ENCODE measurements at regions of chr4 and their contacts with region 1.

Region 1: GRCh38 chr4:26860157-26860921 is at the start of gene STIM2:
- DNase-seq: peak; percentile 97
- H3K4me3 Mint-ChIP-seq: peak within 1 kb of the TSS; percentile 94
- H3K27ac Mint-ChIP-seq: peak within 1 kb of the TSS; percentile 96
- H3K4me1 Mint-ChIP-seq: peaks cover 41% of the 10 kb centered on the region
- H3K27me3 Mint-ChIP-seq: no peaks in the 10 kb centered on the region
- total RNA-seq, gene STIM2: 40.5 to 43.1 TPM

Region 2: DNA sequence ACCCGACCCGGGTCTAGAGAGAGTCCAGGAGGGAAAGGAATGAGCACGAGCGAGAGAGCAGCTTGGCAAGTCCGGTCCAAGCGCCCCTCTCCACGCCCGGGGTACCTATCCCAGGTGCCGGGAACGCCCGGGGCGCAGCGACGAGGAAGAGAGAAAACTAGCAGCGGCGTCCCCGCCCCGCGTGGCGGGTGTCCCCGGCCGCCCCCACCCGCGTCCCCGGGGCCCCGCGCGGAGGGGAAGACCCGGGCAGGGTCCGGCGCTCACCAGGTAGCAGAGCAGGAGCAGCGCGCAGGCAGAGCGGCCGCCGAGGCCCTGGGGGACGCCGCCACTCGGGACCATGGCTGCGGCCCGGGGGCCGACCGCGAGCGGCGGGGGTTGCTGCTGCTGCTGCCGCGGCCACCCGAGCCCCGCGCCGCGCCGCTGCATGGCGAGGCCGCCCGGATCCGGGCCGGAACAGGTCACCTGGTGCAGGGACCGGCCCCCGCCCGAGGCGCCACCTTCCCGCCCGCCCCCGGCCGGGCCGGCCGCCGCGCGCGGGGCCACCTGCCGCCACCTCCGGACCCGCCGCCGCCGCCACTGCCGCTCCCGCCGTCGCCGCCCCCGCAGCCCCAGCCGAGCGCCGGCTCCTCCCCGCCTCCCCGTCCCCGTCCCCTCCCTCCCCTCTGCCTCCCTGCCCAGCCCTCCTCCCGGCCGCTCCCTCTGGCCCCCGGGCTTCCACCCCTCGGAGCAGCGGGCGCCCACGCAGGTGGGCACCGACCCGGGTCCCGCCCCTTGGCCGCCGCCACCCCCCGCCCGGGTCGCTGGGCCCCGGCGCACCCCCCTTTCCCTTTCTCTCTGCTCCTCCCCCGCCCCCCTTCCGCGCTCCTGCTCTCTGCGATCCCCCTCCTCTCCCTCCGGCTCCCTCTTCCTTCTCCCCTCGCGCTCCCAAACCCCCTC is 997.7 kb before region 1 on chr4 and contains the start of gene SEL1L3:
- CTCF ChIA-PET with region 1: no interaction called
- intact Hi-C with region 1: loop called (anchors 2 kb)
- DNase-seq: peak; percentile 53
- H3K4me3 Mint-ChIP-seq: peak within 1 kb of the TSS; percentile 93
- H3K27ac Mint-ChIP-seq: peak within 1 kb of the TSS; percentile 92
- H3K4me1 Mint-ChIP-seq: peaks cover 33% of the 10 kb centered on the region
- H3K27me3 Mint-ChIP-seq: no peaks in the 10 kb centered on the region
- total RNA-seq, gene SEL1L3: 32.3 to 38.2 TPM

Region 3: DNA sequence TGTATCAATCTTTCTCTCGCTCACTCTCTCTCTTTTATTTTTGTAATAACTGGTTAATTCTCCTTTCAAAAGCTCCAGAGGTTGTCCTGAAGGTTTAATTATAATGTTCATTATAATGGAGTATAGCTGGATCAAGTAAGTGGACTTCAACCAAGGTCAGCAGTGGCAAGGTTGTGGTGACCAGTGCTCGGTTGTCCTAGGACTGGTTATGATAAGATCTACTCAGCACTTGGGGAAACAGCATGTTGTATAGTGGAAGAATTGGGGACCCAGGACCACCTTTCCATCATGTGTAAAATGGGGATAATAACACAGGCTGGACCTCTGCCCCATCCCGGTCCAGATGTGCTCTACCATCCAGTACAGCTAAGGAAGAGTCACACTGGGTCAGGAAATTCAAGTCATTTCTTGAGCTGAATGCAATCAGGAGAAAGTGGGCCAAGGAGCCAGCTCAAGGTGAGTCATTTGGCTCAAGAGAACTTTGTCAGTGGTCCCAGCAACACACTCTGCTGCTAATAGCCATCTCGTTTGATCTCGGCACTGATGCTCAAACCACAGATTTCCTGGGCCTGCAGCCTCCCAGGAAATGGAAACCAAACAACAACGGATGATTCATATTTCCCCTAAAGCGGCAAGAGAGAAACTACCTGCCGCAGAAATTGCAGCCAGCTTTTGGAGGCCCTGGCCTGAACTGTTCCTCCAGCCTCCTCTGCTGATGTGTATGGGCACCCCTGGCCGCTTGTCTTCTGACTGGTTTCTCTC is 663.1 kb before region 1 on chr4:
- CTCF ChIA-PET with region 1: no interaction called
- intact Hi-C with region 1: loop called (anchors 5 kb)
- DNase-seq: peak; percentile 86
- H3K4me3 Mint-ChIP-seq: peak overlapping the region; percentile 0
- H3K27ac Mint-ChIP-seq: peak overlapping the region; percentile 88
- H3K4me1 Mint-ChIP-seq: peaks cover 72% of the 10 kb centered on the region
- H3K27me3 Mint-ChIP-seq: peaks cover 1% of the 10 kb centered on the region

Region 4: GRCh38 chr4:26731351-26732035 is 128.8 kb before region 1 on chr4:
- CTCF ChIA-PET with region 1: no interaction called
- intact Hi-C with region 1: loop called (anchors 1 kb)
- DNase-seq: no peak
- H3K4me3 Mint-ChIP-seq: no peak overlapping the region
- H3K27ac Mint-ChIP-seq: no peak overlapping the region
- H3K4me1 Mint-ChIP-seq: peaks cover 11% of the 10 kb centered on the region
- H3K27me3 Mint-ChIP-seq: no peaks in the 10 kb centered on the region

Region 5: DNA sequence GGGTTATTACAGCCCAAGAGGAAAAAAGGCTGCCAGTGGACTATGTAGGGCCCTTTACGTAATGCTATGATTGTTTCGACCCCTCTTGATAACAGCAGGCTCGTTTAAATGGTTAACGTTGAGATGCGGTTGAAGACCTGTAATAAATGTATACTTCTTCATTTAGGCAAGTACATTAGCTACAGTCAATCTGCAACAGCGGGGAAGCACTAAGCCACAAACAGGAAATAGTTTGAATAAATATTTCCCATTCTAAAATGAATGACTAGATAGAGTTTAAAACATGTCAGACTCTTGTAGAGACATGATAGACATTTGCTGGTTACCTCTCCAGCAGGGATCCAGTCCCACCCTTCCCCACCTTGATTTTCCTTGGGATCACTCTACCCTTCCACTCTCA is 37.8 kb before region 1 on chr4:
- CTCF ChIA-PET with region 1: no interaction called
- intact Hi-C with region 1: loop called (anchors 1 kb)
- DNase-seq: peak; percentile 43
- H3K4me3 Mint-ChIP-seq: no peak overlapping the region
- H3K27ac Mint-ChIP-seq: peak overlapping the region; percentile 78
- H3K4me1 Mint-ChIP-seq: peaks cover 15% of the 10 kb centered on the region
- H3K27me3 Mint-ChIP-seq: no peaks in the 10 kb centered on the region

Region 6: GRCh38 chr4:26885912-26886274 is 25.6 kb after region 1 on chr4:
- CTCF ChIA-PET with region 1: interaction called, 13 read pairs
- intact Hi-C with region 1: loop called (anchors 1 kb)
- DNase-seq: peak; percentile 42
- H3K4me3 Mint-ChIP-seq: peak overlapping the region; percentile 58
- H3K27ac Mint-ChIP-seq: peak overlapping the region; percentile 88
- H3K4me1 Mint-ChIP-seq: peaks cover 67% of the 10 kb centered on the region
- H3K27me3 Mint-ChIP-seq: no peaks in the 10 kb centered on the region

Region 7: DNA sequence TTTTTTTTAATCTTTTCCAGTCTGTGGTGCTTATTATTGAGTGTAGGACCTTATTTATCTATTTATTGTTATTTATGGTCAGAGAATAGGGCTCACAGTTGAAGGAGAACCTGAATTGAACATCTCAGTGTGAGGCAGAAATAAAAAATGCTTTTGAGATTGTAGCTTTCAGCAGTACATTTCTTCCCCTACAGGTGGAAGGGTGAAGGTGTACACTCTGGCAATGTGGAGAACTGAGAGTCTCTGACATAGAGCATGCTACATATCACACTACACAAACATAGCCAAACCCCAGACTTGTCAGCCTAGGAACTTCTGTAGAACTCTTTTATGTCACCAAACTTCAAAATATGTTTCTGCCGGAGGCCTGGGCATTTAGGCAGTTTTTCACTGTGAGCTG is 140.5 kb after region 1 on chr4:
- CTCF ChIA-PET with region 1: interaction called, 5 read pairs
- intact Hi-C with region 1: loop called (anchors 1 kb)
- DNase-seq: peak; percentile 30
- H3K4me3 Mint-ChIP-seq: no peak overlapping the region
- H3K27ac Mint-ChIP-seq: no peak overlapping the region
- H3K4me1 Mint-ChIP-seq: peaks cover 63% of the 10 kb centered on the region
- H3K27me3 Mint-ChIP-seq: no peaks in the 10 kb centered on the region